ENCODE measurements at regions of chrX and their contacts with region 1.

Region 1: DNA sequence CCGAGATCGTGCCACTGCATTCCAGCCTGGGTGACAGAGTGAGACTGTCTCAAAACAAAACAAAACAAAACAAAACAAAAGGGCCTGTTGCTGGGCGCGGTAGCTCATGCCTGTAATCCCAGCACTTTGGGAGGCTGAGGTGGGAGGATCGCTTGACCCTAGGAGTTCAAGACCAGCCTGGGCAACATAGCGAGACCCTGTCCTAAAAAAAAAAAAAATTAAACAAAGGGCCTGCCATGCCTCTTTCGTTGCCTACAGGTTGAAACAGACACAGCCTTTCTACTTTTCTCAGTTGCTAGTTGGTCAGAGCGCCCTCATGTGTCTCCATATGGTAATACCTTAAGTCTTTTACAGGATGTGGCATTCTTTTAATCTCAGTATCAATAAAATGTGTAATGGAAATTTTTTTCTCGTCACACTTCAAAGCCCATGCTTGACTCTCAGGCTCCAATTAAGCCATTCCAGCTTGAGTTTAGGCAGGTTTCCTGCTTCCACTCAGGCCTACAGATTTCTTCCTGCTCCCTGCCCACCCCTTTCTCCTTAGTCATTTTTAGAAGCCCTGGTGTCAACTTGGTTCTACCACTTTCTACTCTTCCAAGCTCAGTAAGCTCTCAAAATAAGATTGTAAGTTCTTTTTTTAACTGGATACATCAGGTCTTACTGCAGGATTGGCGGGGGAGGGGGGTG is 4.7 kb upstream of the SOWAHD start:
- DNase-seq: peak; percentile 77
- ATAC-seq: peak; percentile 34
- H3K4me3 Mint-ChIP-seq: peak overlapping the region; percentile 31
- H3K27ac Mint-ChIP-seq: peak overlapping the region; percentile 98
- H3K4me1 Mint-ChIP-seq: peaks cover 54% of the 10 kb centered on the region
- H3K27me3 Mint-ChIP-seq: no peaks in the 10 kb centered on the region

Region 2: GRCh38 chrX:119516157-119516702 is 237.5 kb before region 1 on chrX:
- CTCF ChIA-PET with region 1: interaction called, 14 read pairs
- POLR2A ChIA-PET with region 1: no interaction called
- DNase-seq: peak; percentile 56
- ATAC-seq: peak; percentile 95
- H3K4me3 Mint-ChIP-seq: no peak overlapping the region
- H3K27ac Mint-ChIP-seq: no peak overlapping the region
- H3K4me1 Mint-ChIP-seq: peaks cover 4% of the 10 kb centered on the region
- H3K27me3 Mint-ChIP-seq: no peaks in the 10 kb centered on the region

Region 3: DNA sequence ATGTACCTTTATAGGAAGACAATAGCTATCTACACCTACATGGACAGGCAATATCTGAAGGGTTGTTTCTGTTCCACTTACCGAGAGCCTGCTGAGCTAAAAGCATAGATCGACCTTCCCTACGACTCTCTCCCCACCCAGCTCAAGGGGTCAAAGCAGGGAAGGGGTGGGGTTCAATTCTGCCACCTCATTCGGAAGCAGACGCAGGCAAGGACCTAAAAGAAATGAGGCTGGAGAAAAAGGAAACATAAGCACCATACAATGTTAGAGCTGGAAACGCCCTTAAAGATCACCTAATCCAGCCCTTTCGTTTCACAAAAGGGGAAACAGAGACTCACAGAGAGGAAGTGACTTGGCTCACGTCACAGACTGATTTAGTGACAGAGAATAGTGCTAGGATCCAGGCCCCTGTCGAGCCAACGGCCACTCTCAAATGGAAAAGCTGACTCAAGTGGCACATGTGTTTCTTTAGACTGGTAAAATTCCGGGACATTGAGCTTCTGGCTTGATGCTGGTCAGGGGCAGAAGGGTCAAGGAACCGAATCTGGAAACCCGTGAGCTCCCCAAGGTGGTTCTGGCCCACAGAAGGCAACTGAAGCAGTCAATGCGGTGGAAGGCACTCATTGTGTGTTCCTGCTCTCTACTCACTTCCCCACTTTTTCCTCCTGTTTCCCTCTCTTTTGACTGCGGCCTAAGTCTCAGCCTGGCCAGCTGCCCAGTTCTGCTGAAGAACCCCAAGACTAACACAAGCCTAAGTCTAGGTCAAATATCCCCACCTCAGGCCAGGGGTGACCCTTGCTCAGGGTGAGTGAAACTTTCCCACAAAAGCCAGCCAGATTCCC is 68.3 kb before region 1 on chrX:
- CTCF ChIA-PET with region 1: interaction called, 4 read pairs
- POLR2A ChIA-PET with region 1: interaction called, 48 read pairs
- DNase-seq: peak; percentile 71
- ATAC-seq: peak; percentile 58
- H3K4me3 Mint-ChIP-seq: peak overlapping the region; percentile 92
- H3K27ac Mint-ChIP-seq: peak overlapping the region; percentile 99
- H3K4me1 Mint-ChIP-seq: peaks cover 69% of the 10 kb centered on the region
- H3K27me3 Mint-ChIP-seq: no peaks in the 10 kb centered on the region

Region 4: DNA sequence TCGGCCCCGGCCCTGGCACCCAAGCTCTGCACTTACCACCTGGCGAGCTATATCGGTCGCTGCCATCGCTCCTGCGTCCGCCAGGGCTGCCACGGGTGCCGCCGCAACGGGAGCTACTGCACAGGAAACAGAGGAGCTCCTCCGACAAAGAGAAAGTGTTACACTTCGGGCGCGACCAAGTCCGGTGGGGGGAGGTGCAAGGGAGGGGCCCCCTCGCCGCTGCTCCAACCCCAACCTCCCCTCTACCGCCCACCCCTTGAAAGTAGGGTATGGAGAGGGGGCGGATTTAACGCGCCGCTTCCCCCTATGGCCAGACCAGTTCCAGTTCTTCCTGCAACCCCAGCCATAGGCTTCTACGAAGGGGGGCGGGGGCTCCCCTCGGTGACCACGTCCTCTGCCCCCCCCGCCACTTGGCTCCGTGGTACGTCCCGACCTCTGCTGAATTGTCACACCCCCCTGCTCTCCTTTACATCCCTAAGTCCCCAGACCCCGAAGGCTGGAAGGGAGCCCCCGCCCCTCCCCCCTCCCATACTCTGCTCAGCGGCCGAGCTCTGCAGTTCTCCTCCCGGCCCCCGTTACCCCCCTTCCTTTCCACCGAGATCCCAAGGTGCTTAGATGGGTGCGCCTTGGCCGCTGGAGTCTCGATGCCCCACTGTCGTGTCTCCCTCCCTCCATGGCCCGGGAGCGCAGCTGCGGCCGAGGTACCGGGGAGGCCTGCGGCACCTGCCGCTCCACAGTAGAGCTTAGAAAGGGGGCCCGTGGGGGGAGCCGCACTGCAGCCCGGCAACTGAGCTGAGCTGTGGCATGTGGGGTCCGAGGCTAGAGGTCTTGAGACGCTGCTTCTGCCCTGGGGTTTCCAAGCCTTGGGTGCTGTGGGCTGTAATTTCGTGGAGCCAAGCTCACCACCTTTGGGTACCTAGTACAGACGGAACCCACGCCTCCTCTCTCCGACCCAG is 60.4 kb before region 1 on chrX and contains the start of gene SEPTIN6:
- CTCF ChIA-PET with region 1: interaction called, 4 read pairs
- POLR2A ChIA-PET with region 1: interaction called, 48 read pairs
- DNase-seq: peak; percentile 91
- ATAC-seq: peak; percentile 80
- H3K4me3 Mint-ChIP-seq: peak within 1 kb of the TSS; percentile 92
- H3K27ac Mint-ChIP-seq: peak within 1 kb of the TSS; percentile 99
- H3K4me1 Mint-ChIP-seq: peaks cover 16% of the 10 kb centered on the region
- H3K27me3 Mint-ChIP-seq: no peaks in the 10 kb centered on the region
- total RNA-seq, gene SEPTIN6: 303 to 312 TPM

Region 5: GRCh38 chrX:119721487-119721886 is 32.2 kb before region 1 on chrX:
- CTCF ChIA-PET with region 1: no interaction called
- POLR2A ChIA-PET with region 1: no interaction called
- DNase-seq: no peak
- ATAC-seq: no peak
- H3K4me3 Mint-ChIP-seq: no peak overlapping the region
- H3K27ac Mint-ChIP-seq: no peak overlapping the region
- H3K4me1 Mint-ChIP-seq: no peaks in the 10 kb centered on the region
- H3K27me3 Mint-ChIP-seq: peaks cover 2% of the 10 kb centered on the region

Region 6: DNA sequence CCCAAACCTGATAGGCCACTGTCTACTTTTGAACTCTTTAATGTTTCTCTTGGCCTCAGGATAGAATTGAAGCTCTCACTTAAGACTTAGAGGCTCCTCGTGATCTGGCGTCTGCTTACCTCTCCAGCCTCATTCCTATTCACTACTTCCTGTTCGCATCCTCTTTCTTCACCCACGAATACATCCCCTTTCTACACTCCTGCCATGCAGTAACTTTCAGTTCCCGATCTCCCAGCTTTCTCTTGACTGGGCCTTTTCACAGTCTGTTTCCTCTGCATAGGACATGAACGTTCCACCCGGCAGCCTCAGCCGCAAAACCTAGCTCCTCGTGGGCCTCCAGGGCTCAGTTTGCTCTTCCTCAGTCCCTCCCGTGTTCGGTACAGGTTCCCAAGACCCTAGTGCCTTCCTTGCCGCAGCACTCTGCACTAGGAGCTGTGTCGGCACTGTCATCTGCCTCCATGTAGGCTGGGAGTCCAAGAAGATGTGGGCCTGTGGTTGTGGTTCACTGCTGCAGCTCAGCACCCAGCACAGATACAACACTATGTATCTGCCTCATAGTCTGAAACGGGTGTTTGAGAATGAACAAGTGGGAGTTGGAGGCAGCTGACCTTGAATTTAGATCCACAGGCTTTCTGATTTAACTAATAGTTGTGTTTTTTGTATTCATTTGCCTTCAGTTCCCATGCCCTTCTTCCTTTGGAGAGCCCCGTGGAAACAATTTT is 22.0 kb after region 1 on chrX:
- CTCF ChIA-PET with region 1: interaction called, 17 read pairs
- POLR2A ChIA-PET with region 1: no interaction called
- DNase-seq: no peak
- ATAC-seq: no peak
- H3K4me3 Mint-ChIP-seq: no peak overlapping the region
- H3K27ac Mint-ChIP-seq: peak overlapping the region; percentile 13
- H3K4me1 Mint-ChIP-seq: peaks cover 10% of the 10 kb centered on the region
- H3K27me3 Mint-ChIP-seq: no peaks in the 10 kb centered on the region

Region 7: GRCh38 chrX:119784747-119785446 is 31.2 kb after region 1 on chrX:
- CTCF ChIA-PET with region 1: interaction called, 16 read pairs
- POLR2A ChIA-PET with region 1: interaction called, 5 read pairs
- DNase-seq: peak; percentile 56
- ATAC-seq: peak; percentile 51
- H3K4me3 Mint-ChIP-seq: no peak overlapping the region
- H3K27ac Mint-ChIP-seq: peak overlapping the region; percentile 15
- H3K4me1 Mint-ChIP-seq: peaks cover 44% of the 10 kb centered on the region
- H3K27me3 Mint-ChIP-seq: no peaks in the 10 kb centered on the region

Region 8: GRCh38 chrX:119791438-119792231 is 37.9 kb after region 1 on chrX and contains the start of gene RPL39:
- CTCF ChIA-PET with region 1: interaction called, 7 read pairs
- POLR2A ChIA-PET with region 1: interaction called, 19 read pairs
- DNase-seq: peak; percentile 88
- ATAC-seq: peak; percentile 94
- H3K4me3 Mint-ChIP-seq: peak within 1 kb of the TSS; percentile 95
- H3K27ac Mint-ChIP-seq: peak within 1 kb of the TSS; percentile 94
- H3K4me1 Mint-ChIP-seq: peaks cover 30% of the 10 kb centered on the region
- H3K27me3 Mint-ChIP-seq: no peaks in the 10 kb centered on the region
- total RNA-seq, gene RPL39: 1,775 to 1,899 TPM

Region 9: DNA sequence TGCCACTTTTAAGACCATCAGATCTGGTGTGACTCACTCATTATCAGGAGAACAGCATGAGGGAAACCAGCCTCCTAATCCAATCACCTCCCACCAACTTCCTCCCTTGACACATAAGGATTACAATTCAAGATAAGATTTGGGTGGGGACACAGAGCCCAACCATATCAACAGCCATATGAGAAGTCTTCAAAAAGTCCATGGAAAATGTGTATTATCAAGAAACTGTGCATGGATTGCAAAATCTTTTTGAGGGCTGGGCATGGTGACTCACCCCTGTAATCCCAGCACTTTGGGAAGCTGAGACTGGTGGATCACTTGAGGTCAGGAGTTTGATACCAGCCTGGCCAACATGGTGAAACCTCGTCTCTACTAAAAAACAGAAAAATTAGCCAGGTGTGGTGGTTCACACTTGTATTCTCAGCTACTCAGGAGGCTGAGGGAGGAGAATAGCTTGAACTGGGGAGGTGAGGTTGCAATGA is 55.5 kb after region 1 on chrX:
- CTCF ChIA-PET with region 1: no interaction called
- POLR2A ChIA-PET with region 1: no interaction called
- DNase-seq: no peak
- ATAC-seq: no peak
- H3K4me3 Mint-ChIP-seq: no peak overlapping the region
- H3K27ac Mint-ChIP-seq: no peak overlapping the region
- H3K4me1 Mint-ChIP-seq: no peaks in the 10 kb centered on the region
- H3K27me3 Mint-ChIP-seq: no peaks in the 10 kb centered on the region